ENCODE measurements at regions of chr18 and their contacts with region 1.

Region 1: GRCh38 chr18:40911041-40911440 is 1044.0 kb upstream of the PIK3C3 start:
- DNase-seq: no peak
- ATAC-seq: no peak
- H3K4me3 ChIP-seq: no peak overlapping the region
- H3K4me3 Mint-ChIP-seq: no peak overlapping the region
- H3K27ac ChIP-seq: no peak overlapping the region
- H3K27ac Mint-ChIP-seq: no peak overlapping the region
- H3K4me1 ChIP-seq: no peaks in the 10 kb centered on the region
- H3K4me1 Mint-ChIP-seq: no peaks in the 10 kb centered on the region
- H3K27me3 ChIP-seq: no peaks in the 10 kb centered on the region
- H3K27me3 Mint-ChIP-seq: no peaks in the 10 kb centered on the region

Region 2: GRCh38 chr18:40932862-40933261 is 21.8 kb after region 1 on chr18:
- CTCF ChIA-PET with region 1: interaction called in 1 of 2 experiments, 10 read pairs
- POLR2A ChIA-PET with region 1: no interaction called
- DNase-seq: no peak
- ATAC-seq: no peak
- H3K4me3 ChIP-seq: no peak overlapping the region
- H3K4me3 Mint-ChIP-seq: no peak overlapping the region
- H3K27ac ChIP-seq: no peak overlapping the region
- H3K27ac Mint-ChIP-seq: no peak overlapping the region
- H3K4me1 ChIP-seq: no peaks in the 10 kb centered on the region
- H3K4me1 Mint-ChIP-seq: no peaks in the 10 kb centered on the region
- H3K27me3 ChIP-seq: no peaks in the 10 kb centered on the region
- H3K27me3 Mint-ChIP-seq: no peaks in the 10 kb centered on the region

Region 3: DNA sequence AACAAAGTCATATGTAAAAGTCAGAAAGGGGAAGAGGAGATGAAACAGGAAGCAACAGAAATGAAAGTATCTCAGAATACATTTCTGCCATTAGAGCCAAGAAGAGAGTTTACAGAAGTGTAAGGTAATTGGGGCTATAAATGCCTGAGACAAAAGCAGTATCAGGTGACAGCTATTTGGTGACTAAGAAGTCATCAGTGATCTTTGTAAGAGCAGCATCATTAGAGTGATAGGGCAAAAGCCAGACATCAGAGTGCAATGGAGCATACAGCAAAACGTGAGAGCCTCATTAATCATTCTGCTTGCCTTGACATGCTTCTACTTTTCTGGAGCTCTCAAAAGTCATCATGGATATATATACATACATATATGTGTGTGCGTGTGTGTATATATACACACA is 239.3 kb after region 1 on chr18:
- CTCF ChIA-PET with region 1: no interaction called
- POLR2A ChIA-PET with region 1: no interaction called
- DNase-seq: no peak
- ATAC-seq: no peak
- H3K4me3 ChIP-seq: no peak overlapping the region
- H3K4me3 Mint-ChIP-seq: no peak overlapping the region
- H3K27ac ChIP-seq: no peak overlapping the region
- H3K27ac Mint-ChIP-seq: no peak overlapping the region
- H3K4me1 ChIP-seq: no peaks in the 10 kb centered on the region
- H3K4me1 Mint-ChIP-seq: no peaks in the 10 kb centered on the region
- H3K27me3 ChIP-seq: no peaks in the 10 kb centered on the region
- H3K27me3 Mint-ChIP-seq: no peaks in the 10 kb centered on the region